ENCODE measurements at regions of chr11 and their contacts with region 1.

Region 1: GRCh38 chr11:250740-251299 is 14.0 kb downstream of the PSMD13 start:
- DNase-seq: no peak
- H3K4me3 ChIP-seq: no peak overlapping the region
- H3K27me3 ChIP-seq: no peaks in the 10 kb centered on the region
- CTCF ChIP-seq: peak; percentile 74

Region 2: DNA sequence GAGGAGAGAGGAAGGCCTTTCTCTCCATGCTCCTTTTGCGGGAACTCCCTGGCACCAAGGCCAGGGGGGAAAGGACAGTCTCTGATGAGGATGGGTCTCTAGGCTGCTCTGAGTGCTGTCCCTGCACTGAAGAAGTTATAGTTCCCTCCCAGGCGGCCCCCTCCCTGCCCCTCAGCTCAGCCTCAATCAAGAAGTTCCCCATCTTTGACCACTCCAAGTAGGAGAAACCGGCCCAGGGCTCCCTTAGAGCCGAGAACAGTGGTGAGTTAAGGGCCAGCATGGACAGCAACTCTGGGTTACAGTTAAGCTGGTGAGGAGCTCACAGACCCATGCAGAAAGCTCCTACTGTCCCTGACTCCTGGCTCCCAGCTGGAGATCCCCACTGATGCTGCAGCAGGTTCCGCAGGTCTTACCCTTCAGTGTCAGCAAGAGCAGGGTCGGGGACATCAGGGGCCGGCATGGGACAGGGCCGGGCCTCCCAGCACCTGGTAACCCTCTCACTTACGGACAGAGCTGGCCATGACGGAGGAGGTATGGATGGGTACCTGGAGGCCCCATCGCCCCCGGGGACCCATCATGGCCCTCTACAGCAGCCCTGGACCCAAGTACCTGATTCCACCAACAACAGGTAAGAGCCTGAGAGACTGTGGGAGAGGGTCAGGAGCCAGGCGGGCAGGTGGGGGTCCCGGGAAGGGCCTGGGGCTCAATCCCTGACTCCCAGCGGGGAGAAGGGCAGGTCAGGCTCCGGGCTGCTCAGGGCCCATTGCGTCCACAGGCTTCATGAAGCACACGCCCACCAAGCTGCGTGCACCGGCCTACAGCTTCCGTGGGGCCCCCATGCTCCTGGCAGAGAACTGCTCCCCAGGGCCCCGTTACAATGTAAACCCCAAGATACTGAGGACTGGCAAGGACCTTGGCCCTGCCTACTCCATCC is 53.8 kb before region 1 on chr11:
- CTCF ChIA-PET with region 1: no interaction called
- POLR2A ChIA-PET with region 1: no interaction called
- DNase-seq: no peak
- H3K4me3 ChIP-seq: no peak overlapping the region
- H3K27me3 ChIP-seq: no peaks in the 10 kb centered on the region; the same call in 1 of the 2 replicates
- CTCF ChIP-seq: no peak

Region 3: GRCh38 chr11:236774-237767 is 13.7 kb before region 1 on chr11 and contains the start of gene PSMD13:
- CTCF ChIA-PET with region 1: interaction called, 21 read pairs
- POLR2A ChIA-PET with region 1: no interaction called
- DNase-seq: peak; percentile 20
- H3K4me3 ChIP-seq: peak within 1 kb of the TSS; percentile 97
- H3K27me3 ChIP-seq: no peaks in the 10 kb centered on the region
- CTCF ChIP-seq: no peak
- polyA plus RNA-seq, gene PSMD13: 158 and 187 TPM in 2 replicates

Region 4: GRCh38 chr11:267491-268088 is 16.8 kb after region 1 on chr11:
- CTCF ChIA-PET with region 1: interaction called, 38 read pairs
- POLR2A ChIA-PET with region 1: no interaction called
- DNase-seq: no peak
- H3K4me3 ChIP-seq: no peak overlapping the region
- H3K27me3 ChIP-seq: peaks cover 8% of the 10 kb centered on the region
- CTCF ChIP-seq: no peak

Region 5: GRCh38 chr11:363948-364761 is 113.3 kb after region 1 on chr11:
- CTCF ChIA-PET with region 1: interaction called, 41 read pairs
- POLR2A ChIA-PET with region 1: no interaction called
- DNase-seq: no peak
- H3K4me3 ChIP-seq: no peak overlapping the region
- H3K27me3 ChIP-seq: peaks cover 25% of the 10 kb centered on the region
- CTCF ChIP-seq: peak; percentile 53

Region 6: GRCh38 chr11:369336-370018 is 118.7 kb after region 1 on chr11 and contains the start of gene B4GALNT4:
- CTCF ChIA-PET with region 1: interaction called, 41 read pairs
- POLR2A ChIA-PET with region 1: no interaction called
- DNase-seq: no peak
- H3K4me3 ChIP-seq: peak within 1 kb of the TSS; percentile 39
- H3K27me3 ChIP-seq: peaks cover 26% of the 10 kb centered on the region
- CTCF ChIP-seq: no peak
- polyA plus RNA-seq, gene B4GALNT4: 3.0 and 5.4 TPM in 2 replicates

Region 7: GRCh38 chr11:416757-417621 is 166.2 kb after region 1 on chr11:
- CTCF ChIA-PET with region 1: no interaction called
- POLR2A ChIA-PET with region 1: no interaction called
- DNase-seq: no peak
- H3K4me3 ChIP-seq: peak overlapping the region; percentile 47
- H3K27me3 ChIP-seq: peaks cover 2% of the 10 kb centered on the region
- CTCF ChIP-seq: no peak

Region 8: DNA sequence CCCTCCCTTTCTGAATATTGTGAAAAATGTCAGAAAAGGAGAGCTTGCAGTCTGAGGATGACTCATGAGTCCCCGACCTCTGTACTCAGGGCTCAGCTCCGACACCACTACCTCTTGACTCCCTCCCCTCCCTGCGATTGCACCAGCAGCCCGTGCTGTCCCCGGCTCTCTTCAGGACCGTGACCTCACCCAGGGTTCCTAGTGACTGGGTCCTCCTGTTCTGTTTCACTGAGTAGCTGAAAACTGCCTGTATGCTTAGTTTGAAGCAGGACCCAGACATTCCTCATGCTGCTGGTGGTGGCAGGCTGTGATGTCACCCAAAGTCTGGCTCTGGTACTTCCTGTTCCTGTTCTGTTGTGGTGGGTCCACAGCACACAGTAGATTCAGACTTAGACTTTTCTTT is 337.2 kb after region 1 on chr11:
- CTCF ChIA-PET with region 1: no interaction called
- POLR2A ChIA-PET with region 1: no interaction called
- DNase-seq: no peak
- H3K4me3 ChIP-seq: no peak overlapping the region
- H3K27me3 ChIP-seq: no peaks in the 10 kb centered on the region
- CTCF ChIP-seq: no peak

Measured in BJ (cell line).